Right ventricle myocardium inferior (tissue), 1 donor: ENCODE measurements at regions of chr12 and their contacts with region 1.

Region 1: DNA sequence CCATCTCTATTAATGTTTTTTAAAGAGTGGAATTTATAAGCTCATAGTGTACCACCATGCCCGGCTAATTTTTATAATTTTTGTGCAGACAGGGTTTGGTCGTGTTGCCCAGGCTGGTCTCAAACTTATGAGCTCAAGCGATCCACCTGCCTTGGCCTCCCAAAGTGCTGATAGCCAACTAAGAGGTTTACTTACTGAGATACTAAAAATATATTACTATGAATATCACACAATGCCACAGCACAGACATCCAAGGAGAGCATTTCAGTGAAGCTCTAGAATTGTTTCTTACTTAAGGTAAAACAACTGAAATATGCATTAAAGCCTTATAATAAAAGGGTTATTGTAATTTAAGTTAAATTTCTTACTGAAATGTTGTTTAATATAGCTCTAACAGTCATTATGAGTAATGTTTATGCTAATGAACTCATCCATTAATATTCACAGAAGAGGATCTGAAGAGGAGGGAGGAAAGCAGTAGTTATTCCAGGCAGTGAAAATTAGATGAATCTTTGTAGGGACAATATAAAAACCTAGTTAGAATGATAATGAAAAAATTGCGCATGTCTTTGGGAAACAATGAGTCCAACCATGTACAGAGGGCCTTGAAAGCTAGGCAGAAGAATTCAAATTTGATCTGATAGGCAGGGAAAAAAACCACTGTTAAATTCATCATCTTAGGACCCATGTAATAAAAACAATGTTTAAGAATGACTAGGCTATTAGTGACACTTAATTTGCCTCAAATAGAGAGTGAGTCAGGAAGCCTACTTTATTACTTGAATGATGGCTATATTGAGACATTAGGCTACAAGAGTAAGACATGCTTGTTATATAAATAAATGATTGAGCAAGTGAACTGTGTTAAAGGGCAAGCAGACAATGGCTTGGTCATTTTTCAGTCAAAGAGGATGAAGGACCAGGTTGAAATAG is 99.2 kb downstream of the SLC41A2 start:
- DNase-seq: no peak
- ATAC-seq: no peak

Region 2: GRCh38 chr12:104680066-104680465 is 178.8 kb before region 1 on chr12:
- intact Hi-C with region 1: loop called (anchors 5 kb)
- DNase-seq: no peak
- ATAC-seq: no peak

Region 3: GRCh38 chr12:104740668-104741067 is 118.2 kb before region 1 on chr12:
- intact Hi-C with region 1: loop called (anchors 10 kb)
- DNase-seq: no peak
- ATAC-seq: peak; percentile 65

Region 4: DNA sequence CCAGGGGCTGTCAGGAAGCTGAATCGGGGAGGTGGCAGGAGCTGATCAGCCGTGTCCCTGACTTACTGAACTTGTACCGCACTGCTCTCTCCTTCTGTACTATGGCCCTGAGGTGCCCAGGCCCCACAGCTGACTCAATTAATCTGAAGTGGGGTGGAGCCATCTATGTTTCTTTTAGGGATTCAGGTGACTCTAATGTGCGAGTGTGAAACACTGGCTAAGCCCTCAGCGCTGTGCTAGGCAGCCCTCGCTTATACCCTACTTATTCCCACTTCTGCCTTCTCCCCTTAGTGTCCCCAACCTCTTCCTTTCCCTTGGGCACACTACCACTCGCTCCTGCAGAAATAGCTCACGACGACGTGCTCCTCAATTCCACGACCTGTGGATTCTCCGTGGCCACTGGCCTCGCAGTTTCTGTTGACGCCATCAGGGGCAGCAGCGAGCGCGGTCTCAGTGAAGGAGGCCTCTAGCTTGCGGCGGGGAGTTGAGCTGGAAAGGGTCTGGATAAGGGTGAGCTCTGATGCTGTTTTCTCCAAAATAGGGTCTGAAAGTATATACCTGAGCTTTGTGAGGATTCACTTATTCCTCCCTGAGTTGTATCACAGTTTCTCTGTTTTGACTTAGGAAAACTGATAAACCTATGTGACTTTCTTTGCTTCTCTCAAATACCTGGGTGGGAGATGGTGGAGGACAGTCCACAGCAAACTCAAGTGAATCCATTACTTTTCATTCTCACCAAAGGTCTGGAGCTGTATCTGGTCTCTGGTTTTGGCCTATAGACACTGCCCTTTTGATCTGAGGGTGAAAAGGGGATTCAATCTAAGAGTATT is 68.4 kb before region 1 on chr12:
- intact Hi-C with region 1: loop called (anchors 10 kb)
- DNase-seq: peak; percentile 78
- ATAC-seq: no peak